Gastrocnemius medialis (tissue), 4 donors: ENCODE measurements at regions of chr3 and their contacts with region 1.

Region 1: GRCh38 chr3:120558771-120559241 is 37.3 kb upstream of the NDUFB4 start:
- DNase-seq: peak; percentile 64 to 77
- ATAC-seq: peak; percentile 70 to 82
- H3K4me3 ChIP-seq: peak overlapping the region; percentile 52 to 60 (median 58)
- H3K27ac ChIP-seq: peak overlapping the region; percentile 51 to 78 (median 64)
- H3K4me1 ChIP-seq: peaks cover 18 to 33% of the 10 kb centered on the region in 2 donors
- H3K27me3 ChIP-seq: no peaks in the 10 kb centered on the region
- CTCF ChIP-seq: peak; percentile 92 to 99 (median 92)
- POLR2A ChIP-seq: no peak

Region 2: GRCh38 chr3:120239644-120240043 is 319.2 kb before region 1 on chr3:
- in situ Hi-C with region 1: loop called (anchors 5 to 10 kb)
- intact Hi-C with region 1: loop called (anchors 1 kb)
- DNase-seq: no peak
- ATAC-seq: no peak
- H3K4me3 ChIP-seq: no peak overlapping the region
- H3K27ac ChIP-seq: no peak overlapping the region
- H3K4me1 ChIP-seq: no peaks in the 10 kb centered on the region
- H3K27me3 ChIP-seq: no peaks in the 10 kb centered on the region
- CTCF ChIP-seq: no peak
- POLR2A ChIP-seq: no peak

Region 3: DNA sequence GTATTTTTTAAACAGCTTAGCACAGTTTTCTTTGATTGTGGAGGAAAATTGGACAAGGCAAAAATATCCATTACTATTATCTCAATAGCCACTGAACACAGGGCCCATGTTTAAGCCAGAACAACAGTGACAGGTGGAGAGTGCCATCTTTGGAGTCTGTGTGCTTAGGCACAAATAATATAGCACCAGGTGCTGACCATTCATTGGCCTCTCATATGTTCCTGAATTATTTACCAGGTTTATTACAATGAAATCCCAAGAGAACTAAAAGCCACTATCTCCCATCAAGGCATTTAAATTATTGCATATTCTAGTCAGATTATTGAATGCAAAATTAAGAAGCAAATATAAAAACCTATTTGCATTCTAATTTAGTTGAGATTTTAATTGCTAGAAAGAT is 313.4 kb before region 1 on chr3:
- in situ Hi-C with region 1: loop called (anchors 5 to 10 kb)
- intact Hi-C with region 1: loop called (anchors 1 kb)
- DNase-seq: no peak
- ATAC-seq: no peak
- H3K4me3 ChIP-seq: no peak overlapping the region
- H3K27ac ChIP-seq: no peak overlapping the region
- H3K4me1 ChIP-seq: no peaks in the 10 kb centered on the region
- H3K27me3 ChIP-seq: no peaks in the 10 kb centered on the region
- CTCF ChIP-seq: no peak
- POLR2A ChIP-seq: no peak

Region 4: GRCh38 chr3:120410541-120410940 is 148.3 kb before region 1 on chr3:
- in situ Hi-C with region 1: no loop called
- intact Hi-C with region 1: no loop called
- DNase-seq: no peak
- ATAC-seq: no peak
- H3K4me3 ChIP-seq: no peak overlapping the region
- H3K27ac ChIP-seq: no peak overlapping the region
- H3K4me1 ChIP-seq: no peaks in the 10 kb centered on the region
- H3K27me3 ChIP-seq: no peaks in the 10 kb centered on the region
- CTCF ChIP-seq: no peak
- POLR2A ChIP-seq: no peak

Region 5: GRCh38 chr3:120448707-120449650 is 109.8 kb before region 1 on chr3:
- in situ Hi-C with region 1: no loop called
- intact Hi-C with region 1: no loop called
- DNase-seq: no peak
- ATAC-seq: no peak
- H3K4me3 ChIP-seq: peak overlapping the region; percentile 66 to 84 (median 79)
- H3K27ac ChIP-seq: peak overlapping the region; percentile 67 to 81 (median 74)
- H3K4me1 ChIP-seq: peaks cover 12 to 16% of the 10 kb centered on the region in 2 donors
- H3K27me3 ChIP-seq: peaks cover 0 to 6% (median 0%) of the 10 kb centered on the region in 3 donors
- CTCF ChIP-seq: no peak
- POLR2A ChIP-seq: no peak

Region 6: DNA sequence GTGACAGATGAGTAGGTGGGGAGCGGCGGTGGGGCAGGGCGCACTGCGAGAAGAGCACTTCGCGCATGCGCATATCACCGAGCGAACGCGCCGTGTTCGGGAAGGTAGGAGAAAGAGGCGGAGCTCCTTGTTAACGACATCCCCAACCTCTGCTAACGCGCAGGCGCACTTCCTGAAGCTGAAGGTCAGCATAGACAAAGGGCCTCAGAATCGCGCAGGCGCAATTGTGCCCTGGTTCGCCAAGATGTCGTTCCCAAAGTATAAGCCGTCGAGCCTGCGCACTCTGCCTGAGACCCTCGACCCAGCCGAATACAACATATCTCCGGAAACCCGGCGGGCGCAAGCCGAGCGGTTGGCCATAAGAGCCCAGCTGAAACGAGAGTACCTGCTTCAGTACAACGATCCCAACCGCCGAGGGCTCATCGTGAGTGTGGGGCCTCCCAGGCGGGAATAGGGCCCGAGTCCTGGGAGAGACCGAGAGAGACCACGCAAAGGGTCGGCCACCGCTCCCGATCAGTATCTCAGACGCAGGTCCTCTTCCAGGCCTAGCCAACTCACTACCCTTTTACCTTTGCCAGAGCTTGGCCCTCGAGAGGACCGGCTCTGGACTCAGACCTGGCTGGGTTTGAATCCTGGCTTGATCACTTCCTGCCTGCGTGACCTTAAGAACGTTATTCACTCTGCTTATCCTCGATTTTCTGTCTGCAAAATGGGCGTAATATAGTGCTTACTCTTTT is 37.5 kb after region 1 on chr3 and contains the start of gene NDUFB4:
- in situ Hi-C with region 1: no loop called
- intact Hi-C with region 1: loop called (anchors 1 kb)
- DNase-seq: peak; percentile 95 to 97
- ATAC-seq: peak; percentile 99 to 100
- H3K4me3 ChIP-seq: peak within 1 kb of the TSS; percentile 86 to 99 (median 88)
- H3K27ac ChIP-seq: peak within 1 kb of the TSS; percentile 90 to 96 (median 93)
- H3K4me1 ChIP-seq: peaks cover 36 to 45% of the 10 kb centered on the region in 2 donors
- H3K27me3 ChIP-seq: no peaks in the 10 kb centered on the region
- CTCF ChIP-seq: no peak
- POLR2A ChIP-seq: peak; percentile 71 to 75
- total RNA-seq, gene NDUFB4: 186 to 413 (median 377) TPM

Region 7: GRCh38 chr3:120795017-120795648 is 236.3 kb after region 1 on chr3:
- in situ Hi-C with region 1: loop called (anchors 5 to 25 kb)
- intact Hi-C with region 1: loop called (anchors 2 kb)
- DNase-seq: peak; percentile 40 to 64
- ATAC-seq: peak; percentile 90 to 94
- H3K4me3 ChIP-seq: no peak overlapping the region
- H3K27ac ChIP-seq: no peak overlapping the region
- H3K4me1 ChIP-seq: no peaks in the 10 kb centered on the region
- H3K27me3 ChIP-seq: no peaks in the 10 kb centered on the region
- CTCF ChIP-seq: peak; percentile 67 to 80 (median 77)
- POLR2A ChIP-seq: no peak